ENCODE measurements at regions of chr6 and their contacts with region 1.

Region 1: DNA sequence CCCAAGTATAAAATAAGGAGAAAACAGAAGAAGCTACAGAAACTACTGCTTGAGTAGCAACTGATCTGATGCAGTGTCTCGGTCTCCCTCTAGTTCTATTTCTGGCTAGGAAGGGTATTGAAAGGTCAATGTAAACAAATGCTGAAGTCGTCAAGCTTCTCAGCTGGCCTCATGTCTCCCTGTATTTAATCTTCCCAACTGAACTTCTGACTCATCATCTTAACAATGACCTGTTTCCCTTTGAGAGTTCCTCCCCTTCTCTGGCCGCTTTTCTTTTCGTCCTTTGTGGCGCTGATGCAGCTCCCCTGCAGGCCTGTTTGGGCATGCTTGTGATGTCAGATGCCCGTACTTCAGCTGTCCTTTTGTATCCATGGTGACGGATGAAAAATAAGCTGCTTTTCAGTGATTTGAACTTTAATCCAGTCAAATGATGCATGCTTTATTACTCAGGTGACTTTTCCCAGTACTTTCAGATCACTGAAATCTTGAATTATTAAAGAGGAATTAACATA is 7.8 kb upstream of the LCA5 start:
- DNase-seq: peak; percentile 93
- H3K4me3 ChIP-seq: peak overlapping the region; percentile 23
- H3K27ac ChIP-seq: peak overlapping the region; percentile 87
- H3K4me1 ChIP-seq: peaks cover 48% of the 10 kb centered on the region
- H3K27me3 ChIP-seq: no peaks in the 10 kb centered on the region
- CTCF ChIP-seq: peak; percentile 49

Region 2: DNA sequence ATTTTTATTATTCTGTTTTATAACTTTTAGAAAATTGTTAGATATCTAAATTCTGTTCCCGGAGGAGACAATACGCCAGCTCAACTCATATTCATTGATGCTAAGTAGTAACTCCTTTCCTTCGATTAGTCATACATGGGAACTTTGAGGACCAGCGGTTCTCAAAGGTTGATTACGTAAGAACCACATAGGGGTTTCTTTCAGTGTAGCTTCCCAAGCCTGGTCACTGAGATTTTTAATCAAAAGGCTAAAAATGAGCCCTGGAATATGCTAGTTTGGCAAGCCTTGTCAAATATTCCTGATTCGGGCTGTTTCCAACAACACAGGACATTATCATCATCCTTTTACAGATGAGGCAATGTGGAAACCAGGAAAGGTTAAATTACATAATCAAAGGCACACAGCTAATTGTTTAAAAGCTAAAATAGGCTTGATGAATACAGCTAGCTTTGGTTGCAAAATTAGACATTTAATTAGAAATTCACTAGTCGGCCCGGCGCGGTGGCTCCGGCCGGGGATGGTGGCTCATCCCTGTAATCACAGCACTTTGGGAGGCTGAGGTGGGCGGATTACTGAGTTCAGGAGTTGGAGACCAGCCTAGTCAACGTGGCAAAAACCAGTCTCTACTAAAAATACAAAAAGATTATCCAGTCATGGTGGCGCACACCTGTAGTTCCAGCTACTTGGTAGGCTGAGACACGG is 1906.7 kb before region 1 on chr6:
- CTCF ChIA-PET with region 1: no interaction called
- POLR2A ChIA-PET with region 1: interaction called, 11 read pairs
- intact Hi-C with region 1: no loop called
- DNase-seq: no peak
- H3K4me3 ChIP-seq: no peak overlapping the region
- H3K27ac ChIP-seq: no peak overlapping the region
- H3K4me1 ChIP-seq: no peaks in the 10 kb centered on the region
- H3K27me3 ChIP-seq: peaks cover 3% of the 10 kb centered on the region
- CTCF ChIP-seq: no peak

Region 3: DNA sequence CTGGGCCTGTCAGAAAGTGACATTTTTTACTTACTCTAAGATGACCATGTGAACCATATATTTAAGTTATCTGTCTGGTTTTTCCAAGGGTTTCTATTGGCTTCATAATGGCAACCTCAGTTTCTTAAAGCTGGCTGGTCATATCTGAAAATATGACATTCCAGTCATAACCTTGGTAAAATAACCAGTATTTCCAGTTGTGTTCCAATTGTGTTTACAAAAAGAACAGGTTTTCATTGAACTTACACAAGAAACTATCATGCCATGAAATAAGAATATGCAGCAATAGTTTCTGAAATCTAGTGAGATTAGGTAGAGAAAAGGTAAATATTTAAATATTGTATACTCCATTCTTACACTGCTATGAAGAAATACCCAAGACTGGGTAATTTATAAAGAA is 248.8 kb before region 1 on chr6:
- CTCF ChIA-PET with region 1: no interaction called
- POLR2A ChIA-PET with region 1: no interaction called
- intact Hi-C with region 1: no loop called
- DNase-seq: no peak
- H3K4me3 ChIP-seq: no peak overlapping the region
- H3K27ac ChIP-seq: no peak overlapping the region
- H3K4me1 ChIP-seq: no peaks in the 10 kb centered on the region
- H3K27me3 ChIP-seq: no peaks in the 10 kb centered on the region
- CTCF ChIP-seq: no peak

Region 4: GRCh38 chr6:79630883-79631692 is 86.1 kb after region 1 on chr6 and contains the start of gene SH3BGRL2:
- CTCF ChIA-PET with region 1: no interaction called
- POLR2A ChIA-PET with region 1: no interaction called
- intact Hi-C with region 1: loop called (anchors 1 kb)
- DNase-seq: peak; percentile 84
- H3K4me3 ChIP-seq: peak within 1 kb of the TSS; percentile 87
- H3K27ac ChIP-seq: peak within 1 kb of the TSS; percentile 68
- H3K4me1 ChIP-seq: peaks cover 13% of the 10 kb centered on the region
- H3K27me3 ChIP-seq: no peaks in the 10 kb centered on the region
- CTCF ChIP-seq: no peak
- total RNA-seq, gene SH3BGRL2: 12.0 and 13.5 TPM in 2 replicates

Measured in A673 (cell line).